HEK293 (cell line): ENCODE measurements at regions of chr5 and their contacts with region 1.

Region 1: GRCh38 chr5:76790632-76791290 is 28.1 kb upstream of the F2RL1 start:
- H3K4me3 ChIP-seq: no peak overlapping the region
- H3K27ac ChIP-seq: peak overlapping the region; percentile 79
- H3K4me1 ChIP-seq: peaks cover 19% of the 10 kb centered on the region
- CTCF ChIP-seq: no peak

Region 2: DNA sequence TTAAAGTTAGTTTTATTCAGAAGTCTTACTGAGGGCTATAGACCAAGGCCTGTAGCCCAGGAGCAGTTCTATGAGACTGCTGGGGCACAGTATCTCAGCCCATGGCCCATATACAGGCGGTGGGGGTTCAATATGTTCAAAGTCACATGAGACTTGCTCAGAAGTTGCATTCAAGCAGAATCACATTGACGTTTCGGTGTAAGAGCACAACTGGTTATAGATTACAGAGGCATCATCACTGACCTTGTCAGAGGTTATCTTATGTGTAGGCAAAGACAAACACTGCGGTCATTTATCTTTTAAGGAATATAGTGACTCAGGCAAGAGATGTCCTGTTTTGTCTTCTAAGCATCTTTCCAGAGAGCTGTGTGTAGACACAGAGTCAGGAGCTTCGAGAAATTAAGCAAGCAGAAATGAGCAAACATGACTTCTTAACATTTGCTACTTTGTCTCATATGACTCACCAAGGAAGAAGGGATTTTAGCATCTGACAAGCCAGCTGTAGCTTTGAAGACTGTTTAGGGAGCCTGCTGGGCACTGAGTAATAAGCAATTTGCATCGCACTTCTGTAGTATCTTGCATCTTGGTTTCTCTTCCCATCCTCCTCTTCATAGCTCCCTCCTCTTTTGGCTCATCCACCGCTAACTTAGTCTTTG is 15.2 kb after region 1 on chr5:
- CTCF ChIA-PET with region 1: interaction called, 3 read pairs
- POLR2A ChIA-PET with region 1: interaction called, 13 read pairs
- H3K4me3 ChIP-seq: no peak overlapping the region
- H3K27ac ChIP-seq: no peak overlapping the region; the same call in 1 of the 2 replicates
- H3K4me1 ChIP-seq: peaks cover 2% of the 10 kb centered on the region
- CTCF ChIP-seq: no peak